MCF 10A (cell line): ENCODE measurements at regions of chr3 and their contacts with region 1.

Region 1: GRCh38 chr3:190076601-190077396 is 43.9 kb downstream of the P3H2 start:
- DNase-seq: peak; percentile 73
- H3K4me3 Mint-ChIP-seq: no peak overlapping the region
- H3K27ac Mint-ChIP-seq: peak overlapping the region; percentile 92
- H3K4me1 Mint-ChIP-seq: peaks cover 28% of the 10 kb centered on the region
- H3K27me3 Mint-ChIP-seq: no peaks in the 10 kb centered on the region
- CTCF ChIP-seq: no peak

Region 2: DNA sequence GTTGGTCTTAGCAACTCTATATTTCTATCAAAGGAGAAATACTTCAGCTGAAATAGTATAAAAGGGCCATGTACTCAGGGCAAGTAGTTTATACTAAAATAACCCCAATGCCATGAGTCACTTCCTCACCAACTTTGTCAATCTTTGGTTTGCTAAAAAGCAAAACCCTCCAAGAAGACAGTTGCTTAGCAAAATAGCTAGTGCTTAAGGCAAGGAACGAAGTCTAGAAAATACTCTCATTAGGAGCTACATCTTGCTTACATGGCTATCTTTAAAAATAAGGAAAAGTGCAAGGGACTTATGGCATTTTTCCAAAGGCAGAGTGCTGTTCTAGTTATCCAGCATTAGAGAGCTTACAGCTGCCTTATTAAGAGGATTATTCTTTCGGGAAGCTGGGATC is 15.5 kb after region 1 on chr3:
- CTCF ChIA-PET with region 1: interaction called, 7 read pairs
- POLR2A ChIA-PET with region 1: interaction called, 17 read pairs
- intact Hi-C with region 1: no loop called
- DNase-seq: peak; percentile 57
- H3K4me3 Mint-ChIP-seq: no peak overlapping the region
- H3K27ac Mint-ChIP-seq: no peak overlapping the region
- H3K4me1 Mint-ChIP-seq: peaks cover 40% of the 10 kb centered on the region
- H3K27me3 Mint-ChIP-seq: no peaks in the 10 kb centered on the region
- CTCF ChIP-seq: no peak

Region 3: GRCh38 chr3:190132371-190132770 is 55.6 kb after region 1 on chr3:
- CTCF ChIA-PET with region 1: no interaction called
- POLR2A ChIA-PET with region 1: no interaction called
- intact Hi-C with region 1: no loop called
- DNase-seq: no peak
- H3K4me3 Mint-ChIP-seq: no peak overlapping the region
- H3K27ac Mint-ChIP-seq: no peak overlapping the region
- H3K4me1 Mint-ChIP-seq: peaks cover 7% of the 10 kb centered on the region
- H3K27me3 Mint-ChIP-seq: no peaks in the 10 kb centered on the region
- CTCF ChIP-seq: no peak

Region 4: DNA sequence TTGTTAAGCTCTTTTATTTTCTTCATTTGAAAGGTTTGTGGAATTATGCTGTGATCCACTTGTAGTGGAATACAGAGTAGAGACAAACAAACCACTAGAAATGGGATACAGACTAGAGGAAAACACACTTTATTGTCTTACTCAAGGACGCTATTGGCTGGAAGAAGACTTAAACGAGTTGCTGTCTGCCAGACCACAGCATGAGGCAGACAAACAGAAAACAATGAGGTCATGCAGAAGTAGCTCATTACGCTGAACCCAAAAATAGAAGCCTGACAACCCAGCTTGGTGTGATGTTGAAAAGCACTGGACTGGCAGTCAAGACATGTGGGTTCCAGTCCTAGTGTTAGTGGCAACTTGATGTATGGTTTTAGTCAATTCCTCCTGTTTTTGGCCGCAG is 106.3 kb after region 1 on chr3:
- CTCF ChIA-PET with region 1: no interaction called
- POLR2A ChIA-PET with region 1: no interaction called
- intact Hi-C with region 1: no loop called
- DNase-seq: peak; percentile 84
- H3K4me3 Mint-ChIP-seq: no peak overlapping the region
- H3K27ac Mint-ChIP-seq: peak overlapping the region; percentile 91
- H3K4me1 Mint-ChIP-seq: peaks cover 32% of the 10 kb centered on the region
- H3K27me3 Mint-ChIP-seq: no peaks in the 10 kb centered on the region
- CTCF ChIP-seq: no peak